ENCODE measurements at regions of chr2 and their contacts with region 1.

Region 1: DNA sequence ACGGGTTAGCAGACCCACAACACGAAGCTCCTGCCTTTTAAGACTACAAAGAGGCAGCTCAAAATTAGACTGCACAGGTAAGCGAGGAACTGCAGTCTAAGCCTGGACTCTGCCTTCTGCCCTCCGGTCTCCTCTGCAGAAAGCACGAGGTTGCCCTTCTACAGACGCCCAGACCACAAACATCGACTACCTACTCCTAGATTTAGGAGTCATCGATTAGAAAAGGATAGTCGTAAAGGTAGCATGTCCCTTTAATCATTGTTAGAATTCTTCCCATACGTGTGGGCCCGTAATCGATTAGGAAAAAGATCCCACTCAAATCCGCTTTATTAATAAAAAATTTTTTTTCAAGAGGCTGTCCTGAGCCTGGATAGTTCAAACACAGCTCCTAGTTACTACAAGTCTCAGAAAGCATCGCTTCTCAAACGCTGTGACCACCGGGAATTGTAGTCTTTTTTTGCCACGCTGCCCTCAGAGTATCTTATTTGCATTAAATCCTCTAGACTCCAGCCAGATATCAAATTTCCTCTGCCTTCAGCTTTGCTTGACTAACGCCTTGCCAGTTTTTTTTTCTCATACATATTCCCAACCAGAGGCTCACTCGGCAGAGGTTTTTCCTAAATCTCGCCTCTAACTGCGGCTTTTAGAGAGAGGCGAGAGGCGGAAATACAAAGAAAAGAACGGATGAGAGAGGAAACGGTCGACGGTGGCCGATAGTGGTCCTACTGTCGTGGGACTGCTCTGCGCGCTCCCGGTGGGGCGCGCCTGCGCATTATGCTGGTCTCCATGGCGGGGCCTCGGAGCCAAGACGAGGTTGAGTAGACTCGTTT is at the starts of genes CARF and WDR12:
- DNase-seq: peak; percentile 93
- H3K4me3 ChIP-seq: peak within 1 kb of the TSS; percentile 55
- H3K4me3 Mint-ChIP-seq: peak within 1 kb of the TSS; percentile 97
- H3K27ac Mint-ChIP-seq: peak within 1 kb of the TSS; percentile 92
- H3K4me1 ChIP-seq: 0 out of 2 replicates have a peak, but pooled peaks cover 8% of the 10 kb centered on the region
- H3K4me1 Mint-ChIP-seq: peaks cover 12% of the 10 kb centered on the region
- H3K27me3 ChIP-seq: no peaks in the 10 kb centered on the region
- H3K27me3 Mint-ChIP-seq: no peaks in the 10 kb centered on the region
- CTCF ChIP-seq: no peak
- total RNA-seq, gene CARF: 4.3 and 4.9 TPM in 2 replicates
- total RNA-seq, gene WDR12: 117 and 118 TPM in 2 replicates

Region 2: GRCh38 chr2:203002054-203002821 is 90.5 kb after region 1 on chr2:
- CTCF ChIA-PET with region 1: no interaction called
- POLR2A ChIA-PET with region 1: interaction called, 3 read pairs
- intact Hi-C with region 1: loop called (anchors 1 kb)
- DNase-seq: peak; percentile 70 to 76
- H3K4me3 ChIP-seq: no peak overlapping the region
- H3K4me3 Mint-ChIP-seq: peak overlapping the region; percentile 35
- H3K27ac Mint-ChIP-seq: peak overlapping the region; percentile 79
- H3K4me1 ChIP-seq: peaks cover 28% of the 10 kb centered on the region
- H3K4me1 Mint-ChIP-seq: peaks cover 16% of the 10 kb centered on the region
- H3K27me3 ChIP-seq: no peaks in the 10 kb centered on the region
- H3K27me3 Mint-ChIP-seq: no peaks in the 10 kb centered on the region
- CTCF ChIP-seq: no peak

Region 3: GRCh38 chr2:203097735-203098134 is 186.0 kb after region 1 on chr2:
- CTCF ChIA-PET with region 1: no interaction called
- POLR2A ChIA-PET with region 1: no interaction called
- intact Hi-C with region 1: loop called (anchors 10 kb)
- DNase-seq: peak in 1 of 2 experiments; percentile 37
- H3K4me3 ChIP-seq: no peak overlapping the region
- H3K4me3 Mint-ChIP-seq: no peak overlapping the region
- H3K27ac Mint-ChIP-seq: no peak overlapping the region
- H3K4me1 ChIP-seq: no peaks in the 10 kb centered on the region
- H3K4me1 Mint-ChIP-seq: no peaks in the 10 kb centered on the region
- H3K27me3 ChIP-seq: no peaks in the 10 kb centered on the region
- H3K27me3 Mint-ChIP-seq: no peaks in the 10 kb centered on the region
- CTCF ChIP-seq: peak in 1 of 2 experiments; percentile 65

Region 4: GRCh38 chr2:203238704-203239526 is 327.2 kb after region 1 on chr2 and contains the start of gene CYP20A1:
- CTCF ChIA-PET with region 1: no interaction called
- POLR2A ChIA-PET with region 1: no interaction called
- intact Hi-C with region 1: loop called (anchors 5 kb)
- DNase-seq: peak; percentile 96 to 99
- H3K4me3 ChIP-seq: peak within 1 kb of the TSS; percentile 65
- H3K4me3 Mint-ChIP-seq: peak within 1 kb of the TSS; percentile 97
- H3K27ac Mint-ChIP-seq: peak within 1 kb of the TSS; percentile 97
- H3K4me1 ChIP-seq: peaks cover 11% of the 10 kb centered on the region; the same call in 1 of the 2 replicates
- H3K4me1 Mint-ChIP-seq: peaks cover 15% of the 10 kb centered on the region
- H3K27me3 ChIP-seq: no peaks in the 10 kb centered on the region
- H3K27me3 Mint-ChIP-seq: no peaks in the 10 kb centered on the region
- CTCF ChIP-seq: peak in 1 of 2 experiments; percentile 57
- total RNA-seq, gene CYP20A1: 32.1 and 39.3 TPM in 2 replicates

Measured in Caco-2 (cell line).